ENCODE measurements at regions of chr1 and their contacts with region 1.

Region 1: GRCh38 chr1:151729966-151730291 is 8.6 kb downstream of the RIIAD1 start:
- DNase-seq: no peak
- H3K4me3 ChIP-seq: no peak overlapping the region
- H3K27ac ChIP-seq: peak overlapping the region in 1 of 5 donors; percentile 42
- H3K4me1 ChIP-seq: peaks cover 0 to 14% (median 6%) of the 10 kb centered on the region in 4 donors
- H3K27me3 ChIP-seq: peaks cover 0 to 14% (median 0%) of the 10 kb centered on the region in 3 donors
- CTCF ChIP-seq: no peak
- EP300 ChIP-seq: no peak
- POLR2A ChIP-seq: no peak

Region 2: DNA sequence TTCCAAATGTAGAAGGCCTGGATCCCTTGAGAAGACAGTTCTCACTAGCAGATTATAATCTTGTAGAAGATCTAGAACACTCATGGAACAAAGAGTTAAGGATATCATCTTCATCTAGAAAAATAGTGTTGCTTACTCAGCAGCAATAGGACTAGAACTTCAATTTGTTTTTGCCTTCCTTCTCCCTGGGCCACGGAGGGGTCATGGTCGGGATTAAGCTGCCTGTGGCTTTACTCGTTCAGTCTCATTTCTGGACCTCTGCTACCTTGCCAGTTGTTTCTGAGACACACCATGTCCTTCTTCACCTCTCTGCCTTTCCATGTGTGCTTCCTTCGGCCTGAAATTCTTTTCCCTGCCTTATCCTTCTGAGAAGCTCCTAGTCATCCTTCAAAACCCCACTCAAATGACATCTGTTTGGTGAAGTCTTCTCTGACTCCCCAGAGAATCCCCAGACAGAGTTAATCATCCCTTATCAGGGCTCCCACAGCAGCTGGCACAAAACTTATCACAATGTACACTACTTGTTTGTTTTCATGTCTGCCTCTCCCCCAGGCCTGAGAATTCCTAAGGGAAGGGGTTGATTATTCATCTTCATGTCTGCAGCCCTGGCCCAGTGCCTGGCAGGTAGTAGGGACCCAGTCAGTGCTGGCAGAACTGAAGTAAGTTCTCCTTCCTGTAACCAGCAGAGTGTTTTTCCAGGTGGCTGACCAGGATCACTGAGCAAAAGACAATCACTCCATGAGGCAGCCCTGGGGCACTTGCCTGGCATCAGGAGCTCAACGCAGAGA is 133.6 kb before region 1 on chr1:
- intact Hi-C with region 1: loop called (anchors 5 kb)
- DNase-seq: no peak
- H3K4me3 ChIP-seq: no peak overlapping the region
- H3K27ac ChIP-seq: no peak overlapping the region
- H3K4me1 ChIP-seq: peaks cover 0 to 9% (median 4%) of the 10 kb centered on the region in 4 donors
- H3K27me3 ChIP-seq: no peaks in the 10 kb centered on the region
- CTCF ChIP-seq: no peak
- EP300 ChIP-seq: no peak
- POLR2A ChIP-seq: no peak